Activated CD4-positive, alpha-beta memory T cell treated with anti-CD3 and anti-CD28 coated beads, Interleukin-2, amount 10 ng/mL, durations not matched to agents 7 days and 5 days (primary cell): ENCODE measurements at regions of chr2 and their contacts with region 1.

Region 1: DNA sequence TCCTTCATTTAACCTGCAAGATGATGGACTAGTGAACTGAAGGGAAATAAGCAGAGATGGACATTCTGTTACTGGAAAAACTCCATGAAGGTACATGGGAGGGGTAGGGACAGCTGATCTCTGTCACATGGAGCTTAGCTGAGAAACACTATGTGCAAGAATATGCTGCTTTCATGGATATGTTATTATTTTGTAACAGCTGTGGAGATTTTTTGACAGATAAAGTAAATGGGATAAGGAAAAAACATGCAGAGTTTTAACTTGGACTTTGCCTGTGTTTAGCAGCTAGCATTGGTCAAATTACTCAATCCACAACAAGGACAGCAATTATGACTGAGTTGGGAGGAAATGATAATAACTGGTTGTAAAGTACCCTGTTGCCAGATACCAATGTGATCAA is 28.7 kb upstream of the HNRNPA3 start:
- DNase-seq: no peak
- H3K4me3 Mint-ChIP-seq: no peak overlapping the region
- H3K27ac Mint-ChIP-seq: no peak overlapping the region
- H3K4me1 Mint-ChIP-seq: no peaks in the 10 kb centered on the region
- H3K27me3 Mint-ChIP-seq: peaks cover 19% of the 10 kb centered on the region

Region 2: DNA sequence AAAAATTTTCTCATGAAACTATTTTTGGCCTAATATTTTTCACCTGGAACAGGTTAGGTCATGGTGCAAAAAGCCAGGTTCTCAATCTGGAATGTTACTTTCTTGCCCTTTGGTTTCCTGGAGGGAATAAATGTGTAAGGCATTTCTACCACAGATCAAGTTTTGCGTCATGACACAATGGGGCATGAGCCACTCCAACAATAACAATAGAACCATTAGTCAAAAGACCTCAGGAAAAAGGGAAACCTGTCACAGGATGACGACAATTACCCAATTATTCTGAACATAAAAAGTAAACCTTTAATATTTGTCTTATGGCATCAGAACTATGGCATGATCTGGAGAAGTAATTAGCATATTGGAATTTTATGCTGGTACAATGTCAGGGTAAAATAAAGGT is 59.5 kb before region 1 on chr2:
- CTCF ChIA-PET with region 1: no interaction called
- POLR2A ChIA-PET with region 1: no interaction called
- DNase-seq: no peak
- H3K4me3 Mint-ChIP-seq: no peak overlapping the region
- H3K27ac Mint-ChIP-seq: no peak overlapping the region
- H3K4me1 Mint-ChIP-seq: no peaks in the 10 kb centered on the region
- H3K27me3 Mint-ChIP-seq: peaks cover 20% of the 10 kb centered on the region

Region 3: DNA sequence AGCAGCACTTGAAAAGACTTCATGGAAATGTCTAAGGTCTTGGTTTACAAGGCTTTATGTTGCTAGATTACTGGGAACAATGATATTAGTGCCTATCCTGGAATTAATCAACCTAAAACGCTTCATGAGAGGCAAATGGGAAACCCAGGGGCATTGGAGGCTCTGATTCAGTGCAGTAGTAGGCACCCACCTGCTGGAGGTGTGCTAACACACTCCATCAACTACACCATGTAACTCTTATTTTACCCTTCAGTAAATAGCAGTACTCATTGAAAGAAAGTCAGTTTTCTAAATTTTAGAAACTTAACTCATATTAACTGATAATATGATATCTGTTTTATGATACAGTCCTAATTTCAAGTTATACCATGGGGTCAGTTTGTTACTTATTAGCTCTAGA is 11.3 kb after region 1 on chr2:
- CTCF ChIA-PET with region 1: interaction called, 14 read pairs
- POLR2A ChIA-PET with region 1: no interaction called
- DNase-seq: no peak
- H3K4me3 Mint-ChIP-seq: no peak overlapping the region
- H3K27ac Mint-ChIP-seq: no peak overlapping the region
- H3K4me1 Mint-ChIP-seq: peaks cover 12% of the 10 kb centered on the region
- H3K27me3 Mint-ChIP-seq: no peaks in the 10 kb centered on the region